ENCODE measurements at regions of chr6 and their contacts with region 1.

Region 1: GRCh38 chr6:57316581-57317059 is 810 bp upstream of the PRIM2 start:
- DNase-seq: peak; percentile 76 to 88 (median 85)
- ATAC-seq: peak; percentile 87
- H3K4me3 ChIP-seq: peak overlapping the region; percentile 13
- H3K4me1 ChIP-seq: peaks cover 10% of the 10 kb centered on the region
- CTCF ChIP-seq: peak; percentile 48

Region 2: GRCh38 chr6:56902641-56903464 is 413.8 kb before region 1 on chr6:
- intact Hi-C with region 1: loop called in 1 of 2 experiments (anchors 5 kb)
- DNase-seq: no peak
- ATAC-seq: no peak
- H3K4me3 ChIP-seq: no peak overlapping the region
- H3K4me1 ChIP-seq: peaks cover 6% of the 10 kb centered on the region
- CTCF ChIP-seq: peak; percentile 31

Region 3: GRCh38 chr6:56938649-56939191 is 377.9 kb before region 1 on chr6:
- intact Hi-C with region 1: no loop called
- DNase-seq: no peak
- ATAC-seq: peak; percentile 31
- H3K4me3 ChIP-seq: no peak overlapping the region
- H3K4me1 ChIP-seq: no peaks in the 10 kb centered on the region
- CTCF ChIP-seq: no peak

Region 4: GRCh38 chr6:57172136-57173055 is 144.2 kb before region 1 on chr6 and contains the start of gene BAG2:
- intact Hi-C with region 1: loop called in 1 of 2 experiments (anchors 10 kb)
- DNase-seq: peak; percentile 83 to 90 (median 86)
- ATAC-seq: peak; percentile 93
- H3K4me3 ChIP-seq: peak within 1 kb of the TSS; percentile 27
- H3K4me1 ChIP-seq: no peaks in the 10 kb centered on the region
- CTCF ChIP-seq: peak; percentile 11
- total RNA-seq, gene BAG2: 0.96 to 43.7 (median 2.3) TPM

Region 5: GRCh38 chr6:57190140-57190539 is 126.5 kb before region 1 on chr6:
- intact Hi-C with region 1: loop called in 1 of 2 experiments (anchors 10 kb)
- DNase-seq: no peak
- ATAC-seq: peak; percentile 46
- H3K4me3 ChIP-seq: no peak overlapping the region
- H3K4me1 ChIP-seq: no peaks in the 10 kb centered on the region
- CTCF ChIP-seq: no peak

Region 6: DNA sequence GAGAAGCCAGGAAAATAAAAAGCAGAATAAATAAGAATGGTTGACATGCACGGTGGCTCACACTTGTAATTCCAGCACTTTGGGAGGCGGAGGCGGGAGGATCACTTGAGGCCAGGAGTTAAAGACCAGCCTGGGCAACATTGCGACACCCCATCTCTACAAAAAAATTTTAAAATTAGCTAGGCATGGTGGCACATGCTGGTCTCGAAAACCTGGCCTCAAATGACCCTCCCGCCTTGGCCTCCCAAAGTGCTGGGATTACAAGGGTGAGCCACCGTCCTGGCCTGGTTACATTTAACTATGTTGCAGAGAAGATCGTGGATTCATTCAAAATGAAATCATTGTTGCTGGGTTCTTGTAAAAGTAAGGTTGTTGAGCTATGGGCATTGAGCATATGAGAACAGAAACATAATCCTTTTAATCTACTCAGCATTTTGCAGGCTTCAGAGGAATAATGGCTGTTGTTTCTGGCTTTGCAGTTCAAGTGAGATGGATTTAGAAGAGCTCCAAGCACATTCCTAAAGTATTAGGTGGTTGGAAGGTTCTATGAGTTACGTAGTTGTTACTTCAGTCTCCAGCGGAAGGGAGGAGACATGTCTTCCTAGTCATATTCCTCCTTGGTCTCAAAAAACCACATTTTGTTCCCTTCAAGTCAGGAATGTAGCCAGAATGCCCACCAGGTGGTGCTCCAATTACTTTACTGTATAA is 48.9 kb before region 1 on chr6:
- intact Hi-C with region 1: loop called in 1 of 2 experiments (anchors 5 kb)
- DNase-seq: peak in 1 of 3 donors; percentile 78
- ATAC-seq: peak; percentile 65
- H3K4me3 ChIP-seq: no peak overlapping the region
- H3K4me1 ChIP-seq: no peaks in the 10 kb centered on the region
- CTCF ChIP-seq: no peak

Measured in mucosa of descending colon (tissue), 3 donors.